ENCODE measurements at regions of chr5 and their contacts with region 1.

Region 1: DNA sequence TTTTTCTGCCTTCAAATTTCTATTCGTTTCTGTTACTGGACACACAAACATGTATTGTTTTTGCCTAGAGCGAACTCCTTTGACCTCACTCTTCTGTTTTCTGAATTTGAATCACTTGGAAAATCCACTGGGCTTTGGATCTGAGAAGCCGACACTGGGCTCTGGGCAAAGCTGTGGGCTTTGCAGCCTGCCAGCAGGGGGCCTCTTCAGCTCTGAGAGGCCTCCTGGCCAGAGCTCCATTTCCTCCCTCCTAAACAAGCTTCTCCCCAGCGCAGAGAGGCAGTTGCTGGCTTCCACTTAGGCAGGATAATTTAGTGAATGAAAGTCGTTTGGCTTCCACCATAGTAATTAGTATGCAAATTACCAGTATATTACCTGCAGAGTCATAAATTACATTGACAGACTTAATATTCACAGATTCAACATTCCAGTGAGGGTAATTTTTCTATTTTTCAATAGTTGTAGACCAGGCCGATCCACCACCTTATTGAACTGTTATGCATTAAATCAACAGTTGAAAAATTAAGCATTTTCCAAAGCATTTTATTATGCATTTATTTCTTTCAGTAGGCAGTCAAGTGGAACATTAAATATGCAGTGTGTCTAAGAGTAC is 104.0 kb upstream of the ZNF366 start:
- DNase-seq: peak; percentile 78 to 85
- ATAC-seq: peak; percentile 97 to 100 (median 98)
- H3K4me3 ChIP-seq: peak overlapping the region; percentile 8
- H3K27ac ChIP-seq: peak overlapping the region; percentile 7
- H3K4me1 ChIP-seq: peaks cover 6% of the 10 kb centered on the region
- H3K27me3 ChIP-seq: no peaks in the 10 kb centered on the region
- CTCF ChIP-seq: peak; percentile 97

Region 2: GRCh38 chr5:72649449-72649848 is 38.2 kb after region 1 on chr5:
- intact Hi-C with region 1: no loop called
- DNase-seq: no peak
- ATAC-seq: peak; percentile 42 to 84 (median 75)
- H3K4me3 ChIP-seq: no peak overlapping the region
- H3K27ac ChIP-seq: peak overlapping the region; percentile 48
- H3K4me1 ChIP-seq: peaks cover 9% of the 10 kb centered on the region
- H3K27me3 ChIP-seq: no peaks in the 10 kb centered on the region
- CTCF ChIP-seq: no peak

Region 3: GRCh38 chr5:72661405-72661804 is 50.2 kb after region 1 on chr5:
- intact Hi-C with region 1: loop called in 1 of 2 experiments (anchors 5 kb)
- DNase-seq: no peak
- ATAC-seq: peak; percentile 63 to 76 (median 73)
- H3K4me3 ChIP-seq: no peak overlapping the region
- H3K27ac ChIP-seq: no peak overlapping the region
- H3K4me1 ChIP-seq: peaks cover 24% of the 10 kb centered on the region
- H3K27me3 ChIP-seq: no peaks in the 10 kb centered on the region
- CTCF ChIP-seq: no peak

Region 4: GRCh38 chr5:72692231-72692637 is 81.0 kb after region 1 on chr5:
- intact Hi-C with region 1: no loop called
- DNase-seq: no peak
- ATAC-seq: no peak
- H3K4me3 ChIP-seq: no peak overlapping the region
- H3K27ac ChIP-seq: no peak overlapping the region
- H3K4me1 ChIP-seq: no peaks in the 10 kb centered on the region
- H3K27me3 ChIP-seq: peaks cover 0 to 2% (median 0%) of the 10 kb centered on the region in 3 donors
- CTCF ChIP-seq: no peak

Region 5: GRCh38 chr5:72822944-72823343 is 211.7 kb after region 1 on chr5:
- intact Hi-C with region 1: loop called (anchors 2 to 5 kb)
- DNase-seq: no peak
- ATAC-seq: peak in 1 of 4 donors; percentile 27
- H3K4me3 ChIP-seq: no peak overlapping the region
- H3K27ac ChIP-seq: peak overlapping the region; percentile 39
- H3K4me1 ChIP-seq: peaks cover 70% of the 10 kb centered on the region
- H3K27me3 ChIP-seq: no peaks in the 10 kb centered on the region
- CTCF ChIP-seq: no peak

Region 6: DNA sequence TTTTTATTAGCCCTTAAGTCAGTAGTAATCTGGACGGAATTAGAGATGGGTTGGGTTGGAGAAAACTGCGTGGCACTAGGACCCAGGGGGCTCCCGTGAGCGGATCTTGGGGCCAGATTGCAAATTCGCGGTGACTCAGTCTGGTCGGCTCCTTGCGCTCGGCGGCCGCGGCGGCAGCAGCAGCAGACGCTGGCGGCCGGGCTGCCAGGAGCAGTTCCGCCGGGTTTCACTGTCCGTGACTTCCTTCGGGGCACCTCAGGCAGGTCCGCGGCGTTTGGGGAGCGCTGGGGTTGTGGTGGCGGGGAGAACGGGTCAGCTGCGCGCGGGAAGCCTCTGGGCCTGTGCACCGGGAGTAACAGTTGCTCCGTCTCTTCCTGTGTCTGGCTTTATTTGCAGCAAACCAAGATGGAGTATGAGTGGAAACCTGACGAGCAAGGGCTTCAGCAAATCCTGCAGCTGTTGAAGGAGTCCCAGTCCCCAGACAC is 236.8 kb after region 1 on chr5:
- intact Hi-C with region 1: loop called in 1 of 2 experiments (anchors 10 kb)
- DNase-seq: peak; percentile 93 to 95
- ATAC-seq: peak; percentile 93 to 95 (median 94)
- H3K4me3 ChIP-seq: peak overlapping the region; percentile 81
- H3K27ac ChIP-seq: peak overlapping the region; percentile 95
- H3K4me1 ChIP-seq: peaks cover 73% of the 10 kb centered on the region
- H3K27me3 ChIP-seq: no peaks in the 10 kb centered on the region
- CTCF ChIP-seq: peak; percentile 25